Panc1 (cell line): ENCODE measurements at regions of chr14 and their contacts with region 1.

Region 1: GRCh38 chr14:90399541-90400444 is 3.0 kb downstream of the CALM1 start:
- DNase-seq: peak; percentile 73
- ATAC-seq: peak; percentile 79
- H3K4me3 ChIP-seq: peak overlapping the region; percentile 82 to 92; a peak in 3 of 4 replicates
- H3K27ac ChIP-seq: no peak overlapping the region; the same call in 1 of the 2 replicates
- H3K4me1 ChIP-seq: peaks cover 11% of the 10 kb centered on the region
- H3K27me3 ChIP-seq: no peaks in the 10 kb centered on the region
- CTCF ChIP-seq: peak; percentile 98

Region 2: GRCh38 chr14:90301668-90302090 is 98.1 kb before region 1 on chr14:
- CTCF ChIA-PET with region 1: no interaction called
- POLR2A ChIA-PET with region 1: no interaction called
- in situ Hi-C with region 1: no loop called
- intact Hi-C with region 1: loop called (anchors 5 kb)
- DNase-seq: peak; percentile 7
- ATAC-seq: peak; percentile 83
- H3K4me3 ChIP-seq: no peak overlapping the region
- H3K27ac ChIP-seq: no peak overlapping the region
- H3K4me1 ChIP-seq: no peaks in the 10 kb centered on the region
- H3K27me3 ChIP-seq: no peaks in the 10 kb centered on the region
- CTCF ChIP-seq: peak; percentile 60; the same call in 1 of the 2 replicates

Region 3: DNA sequence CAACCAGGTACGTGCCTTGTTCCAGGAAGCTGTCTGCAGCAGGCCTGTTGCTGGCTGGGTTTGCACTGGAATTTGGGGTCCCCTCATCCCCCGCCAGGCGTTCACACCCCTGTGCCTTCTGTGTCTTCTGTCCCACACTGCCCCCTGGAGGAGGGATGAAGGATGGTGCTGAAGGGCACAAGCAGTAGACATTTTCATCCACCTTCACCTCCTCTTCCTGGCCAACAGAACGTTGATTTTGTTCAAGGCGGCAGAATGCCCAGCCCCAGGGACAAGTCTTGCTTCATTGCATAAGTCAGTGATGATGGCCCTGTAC is 119.1 kb after region 1 on chr14:
- CTCF ChIA-PET with region 1: no interaction called
- POLR2A ChIA-PET with region 1: no interaction called
- in situ Hi-C with region 1: no loop called
- intact Hi-C with region 1: loop called (anchors 10 kb)
- DNase-seq: no peak
- ATAC-seq: no peak
- H3K4me3 ChIP-seq: no peak overlapping the region
- H3K27ac ChIP-seq: no peak overlapping the region
- H3K4me1 ChIP-seq: peaks cover 3% of the 10 kb centered on the region
- H3K27me3 ChIP-seq: no peaks in the 10 kb centered on the region
- CTCF ChIP-seq: peak; percentile 64

Region 4: DNA sequence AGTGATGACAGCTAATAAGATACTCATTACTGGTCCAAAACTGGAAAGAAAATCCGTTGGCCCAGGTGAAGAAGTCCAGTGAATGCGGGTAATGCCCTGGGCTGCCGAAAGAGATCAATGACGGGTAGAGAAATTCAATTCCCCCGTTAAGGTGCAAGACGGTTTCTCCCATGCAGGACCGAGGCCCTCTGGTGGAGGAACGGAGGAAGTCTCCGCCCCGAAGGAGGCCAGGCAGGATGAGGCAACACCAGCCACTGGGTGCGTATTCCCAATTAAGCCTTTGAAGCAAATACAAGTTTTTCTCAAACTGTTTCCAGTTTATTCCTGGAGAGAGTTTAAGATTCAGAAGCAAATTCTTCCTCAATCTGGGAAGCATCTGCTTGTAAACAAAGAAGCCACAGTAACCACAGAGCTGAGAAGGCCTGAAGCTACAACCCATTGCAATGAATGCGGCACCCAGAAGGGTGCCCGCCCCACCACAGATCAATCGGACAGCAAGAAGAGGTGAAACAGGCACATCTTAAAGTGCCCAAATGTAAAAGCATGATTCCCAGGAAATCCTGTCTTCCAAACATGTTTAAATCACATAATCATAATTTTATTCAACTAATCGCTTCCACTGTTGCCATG is 297.9 kb after region 1 on chr14:
- CTCF ChIA-PET with region 1: interaction called, 8 read pairs
- POLR2A ChIA-PET with region 1: no interaction called
- in situ Hi-C with region 1: no loop called
- intact Hi-C with region 1: loop called (anchors 2 kb)
- DNase-seq: peak; percentile 36
- ATAC-seq: peak; percentile 93
- H3K4me3 ChIP-seq: no peak overlapping the region
- H3K27ac ChIP-seq: no peak overlapping the region; the same call in 1 of the 2 replicates
- H3K4me1 ChIP-seq: peaks cover 4% of the 10 kb centered on the region
- H3K27me3 ChIP-seq: no peaks in the 10 kb centered on the region
- CTCF ChIP-seq: peak; percentile 88

Region 5: DNA sequence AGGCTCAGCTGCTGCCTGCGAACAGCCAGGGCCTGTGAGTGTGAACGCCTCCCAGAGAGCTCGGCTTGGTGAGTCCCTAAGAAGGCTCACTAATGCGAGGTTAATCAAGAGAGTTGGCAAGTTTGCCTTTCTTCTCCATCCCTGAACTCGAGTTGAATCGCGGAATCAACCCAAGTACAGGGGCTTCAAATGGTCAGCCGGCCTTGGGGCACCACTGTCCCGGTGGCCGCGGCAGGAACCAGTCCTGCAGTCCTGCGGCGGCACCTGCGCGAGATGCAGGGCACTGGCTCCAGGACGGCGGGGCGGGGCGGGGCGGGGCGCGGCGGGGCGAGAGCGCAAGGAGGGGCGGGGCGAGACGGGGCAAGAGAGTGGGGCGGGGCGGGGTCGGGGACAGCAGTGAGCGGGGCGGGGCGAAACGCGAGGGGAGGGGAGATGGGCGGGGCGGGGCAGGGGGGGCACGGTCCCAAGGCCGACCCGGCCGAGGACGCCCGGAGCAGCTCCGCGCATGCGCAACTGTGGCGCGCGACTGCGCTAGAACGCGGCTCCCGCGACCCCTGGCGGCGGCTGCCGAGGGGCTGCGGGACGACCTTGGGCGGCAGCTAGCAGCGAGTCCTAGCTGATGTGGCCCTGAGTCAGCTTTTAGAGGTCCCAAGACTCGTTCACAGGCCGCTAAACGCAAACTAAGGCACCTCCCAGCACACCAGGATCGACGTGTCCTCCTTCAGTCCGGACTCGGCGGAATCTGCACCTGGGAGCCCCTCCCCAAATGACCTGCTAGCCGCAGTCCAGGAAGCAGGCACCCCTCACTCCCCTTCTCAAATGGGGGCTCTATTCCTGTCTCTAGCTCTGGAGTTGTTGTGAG is 358.5 kb after region 1 on chr14:
- CTCF ChIA-PET with region 1: interaction called, 3 read pairs
- POLR2A ChIA-PET with region 1: no interaction called
- in situ Hi-C with region 1: no loop called
- intact Hi-C with region 1: loop called (anchors 10 kb)
- DNase-seq: peak; percentile 71
- ATAC-seq: peak; percentile 96
- H3K4me3 ChIP-seq: peak overlapping the region; percentile 47 to 78
- H3K27ac ChIP-seq: peak overlapping the region; percentile 87
- H3K4me1 ChIP-seq: peaks cover 7% of the 10 kb centered on the region
- H3K27me3 ChIP-seq: no peaks in the 10 kb centered on the region
- CTCF ChIP-seq: peak; percentile 85